Vagina (tissue), 2 donors: ENCODE measurements at regions of chr5 and their contacts with region 1.

Region 1: DNA sequence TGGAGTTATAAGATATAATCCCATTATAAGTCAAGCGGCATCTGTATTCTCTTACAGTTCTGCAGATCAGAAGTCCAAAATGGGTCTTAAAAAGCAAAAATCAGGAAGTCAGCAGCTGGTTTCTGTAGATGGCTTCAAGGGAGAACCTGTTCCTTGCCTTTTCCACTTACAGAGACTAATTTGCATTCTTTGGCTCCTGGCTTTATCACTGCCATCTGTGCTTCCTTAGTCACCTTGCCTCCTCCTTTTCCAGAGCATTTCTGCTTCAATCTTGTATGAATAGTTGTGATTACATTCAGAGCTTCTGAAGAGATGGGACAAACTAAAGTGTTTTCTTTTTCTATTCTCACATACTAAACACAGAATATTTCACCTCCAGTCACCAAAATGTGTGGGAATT is 647.3 kb upstream of the GRAMD2B start:
- DNase-seq: no peak
- H3K4me3 ChIP-seq: no peak overlapping the region
- H3K27ac ChIP-seq: no peak overlapping the region
- H3K4me1 ChIP-seq: no peaks in the 10 kb centered on the region
- H3K27me3 ChIP-seq: no peaks in the 10 kb centered on the region
- CTCF ChIP-seq: no peak
- POLR2A ChIP-seq: no peak

Region 2: GRCh38 chr5:124210111-124210918 is 1565.6 kb before region 1 on chr5:
- intact Hi-C with region 1: loop called (anchors 5 kb)
- DNase-seq: no peak
- H3K4me3 ChIP-seq: no peak overlapping the region
- H3K27ac ChIP-seq: no peak overlapping the region
- H3K4me1 ChIP-seq: no peaks in the 10 kb centered on the region
- H3K27me3 ChIP-seq: no peaks in the 10 kb centered on the region
- CTCF ChIP-seq: no peak
- POLR2A ChIP-seq: no peak